HEK293 (cell line): ENCODE measurements at regions of chr10 and their contacts with region 1.

Region 1: GRCh38 chr10:70146489-70147258 is at the start of gene TYSND1:
- H3K4me3 ChIP-seq: peak within 1 kb of the TSS; percentile 64
- H3K27ac ChIP-seq: peak within 1 kb of the TSS; percentile 84
- H3K4me1 ChIP-seq: peaks cover 6% of the 10 kb centered on the region; the same call in 1 of the 2 replicates
- CTCF ChIP-seq: peak; percentile 95

Region 2: DNA sequence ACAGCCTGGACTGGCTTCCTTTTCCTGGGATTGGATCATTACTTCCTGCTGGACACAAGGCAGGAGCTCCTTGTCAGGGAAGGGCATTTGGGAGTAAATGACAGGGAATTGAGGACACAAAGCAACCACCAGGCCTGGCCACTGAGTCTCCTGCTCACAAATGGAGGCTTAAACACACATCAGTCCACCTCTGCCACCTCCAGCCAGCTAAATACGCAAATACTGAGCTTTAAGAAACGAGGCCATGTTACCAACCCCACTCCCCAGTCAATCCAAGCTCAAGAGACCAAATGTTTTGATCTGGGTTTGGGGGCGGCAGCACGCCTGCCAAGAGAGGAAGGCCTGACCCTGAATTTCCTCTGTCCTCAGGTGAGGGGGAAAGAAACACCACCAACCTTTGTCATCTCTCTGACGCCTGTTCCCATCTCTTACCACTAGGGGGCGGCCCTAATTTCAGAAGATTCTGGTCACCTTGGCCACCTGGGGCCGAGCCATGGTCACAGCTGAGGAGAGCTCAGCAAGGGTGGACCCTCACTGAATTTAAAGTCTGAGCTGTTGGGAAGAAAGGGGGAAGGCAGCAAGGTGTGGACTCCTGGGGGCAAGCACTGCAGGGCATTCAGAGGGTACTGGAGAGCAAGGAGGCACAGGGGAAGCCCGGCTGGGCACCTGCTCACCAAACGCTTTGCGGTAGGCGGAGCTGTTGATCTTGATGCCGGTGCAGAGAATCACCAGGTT is 30.6 kb before region 1 on chr10:
- CTCF ChIA-PET with region 1: interaction called, 63 read pairs
- POLR2A ChIA-PET with region 1: interaction called, 17 read pairs
- H3K4me3 ChIP-seq: no peak overlapping the region
- H3K27ac ChIP-seq: no peak overlapping the region
- H3K4me1 ChIP-seq: no peaks in the 10 kb centered on the region; the same call in 1 of the 2 replicates
- CTCF ChIP-seq: peak; percentile 76

Region 3: DNA sequence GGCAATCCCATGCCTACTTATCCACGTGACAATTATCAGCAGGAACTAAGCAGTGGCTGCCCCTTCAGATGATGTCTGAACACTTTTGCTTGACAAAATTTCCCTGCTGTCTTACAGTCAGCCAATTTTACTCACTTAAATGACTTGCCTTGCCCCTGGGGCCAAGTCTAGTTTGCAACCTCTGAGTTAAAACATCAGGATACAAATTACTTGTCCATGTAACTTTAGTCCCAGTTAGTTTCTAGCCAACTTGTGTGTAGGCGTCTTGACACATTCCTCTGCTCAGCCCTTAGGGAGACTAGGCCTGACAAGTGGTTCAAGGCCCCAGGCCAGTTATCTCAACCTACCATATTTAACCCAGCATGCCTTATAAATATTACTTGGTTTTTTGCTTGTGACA is 11.4 kb after region 1 on chr10:
- CTCF ChIA-PET with region 1: interaction called, 43 read pairs
- POLR2A ChIA-PET with region 1: interaction called, 17 read pairs
- H3K4me3 ChIP-seq: no peak overlapping the region
- H3K27ac ChIP-seq: no peak overlapping the region
- H3K4me1 ChIP-seq: peaks cover 3% of the 10 kb centered on the region; the same call in 1 of the 2 replicates
- CTCF ChIP-seq: no peak

Region 4: GRCh38 chr10:70227548-70228320 is 81.1 kb after region 1 on chr10:
- CTCF ChIA-PET with region 1: interaction called, 14 read pairs
- POLR2A ChIA-PET with region 1: interaction called, 13 read pairs
- H3K4me3 ChIP-seq: no peak overlapping the region
- H3K27ac ChIP-seq: no peak overlapping the region
- H3K4me1 ChIP-seq: no peaks in the 10 kb centered on the region
- CTCF ChIP-seq: no peak

Region 5: DNA sequence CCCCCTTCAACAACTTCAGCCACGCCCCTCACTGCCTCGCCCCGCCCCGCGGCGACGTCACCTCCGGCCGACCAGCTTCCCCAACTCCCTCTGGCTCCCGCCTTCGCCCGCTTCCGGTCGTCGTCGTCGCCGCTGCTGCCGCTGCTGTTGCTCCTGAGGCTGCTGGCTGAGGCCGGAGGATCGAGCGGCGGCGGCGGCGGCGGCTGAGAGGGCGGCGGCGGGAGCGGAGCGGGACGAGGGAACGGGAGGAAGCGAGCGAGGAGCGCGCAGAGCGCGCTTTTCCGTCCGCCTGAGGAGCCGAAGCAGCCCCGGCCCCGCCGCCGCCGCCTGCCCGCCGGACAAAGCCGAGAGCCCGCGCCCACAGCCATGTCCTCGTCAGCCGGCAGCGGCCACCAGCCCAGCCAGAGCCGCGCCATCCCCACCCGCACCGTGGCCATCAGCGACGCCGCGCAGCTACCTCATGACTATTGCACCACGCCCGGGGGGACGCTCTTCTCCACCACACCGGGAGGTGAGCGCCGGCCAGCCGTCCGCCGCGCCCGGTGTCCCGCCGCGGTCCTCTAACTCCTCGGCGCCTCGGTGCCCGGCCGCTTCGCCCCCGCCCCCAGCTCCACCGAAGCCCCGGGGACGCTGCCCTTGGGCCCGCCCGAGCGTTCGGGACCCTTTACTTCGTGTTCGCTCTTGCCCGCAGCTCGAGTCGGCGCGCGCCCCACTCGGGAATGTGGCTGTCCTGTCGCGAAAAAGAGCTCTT is 257.5 kb after region 1 on chr10 and contains the start of gene EIF4EBP2:
- CTCF ChIA-PET with region 1: interaction called, 5 read pairs
- POLR2A ChIA-PET with region 1: interaction called, 18 read pairs
- H3K4me3 ChIP-seq: peak within 1 kb of the TSS; percentile 76
- H3K27ac ChIP-seq: peak within 1 kb of the TSS; percentile 66
- H3K4me1 ChIP-seq: peaks cover 6% of the 10 kb centered on the region; the same call in 1 of the 2 replicates
- CTCF ChIP-seq: no peak